Posterior vena cava (tissue), 2 donors: ENCODE measurements at regions of chr7 and their contacts with region 1.

Region 1: GRCh38 chr7:31043051-31043471 is 9.0 kb upstream of the ADCYAP1R1 start:
- DNase-seq: no peak

Region 2: GRCh38 chr7:30920584-30921539 is 122.2 kb before region 1 on chr7:
- intact Hi-C with region 1: no loop called
- DNase-seq: peak; percentile 92

Region 3: GRCh38 chr7:30996256-30996655 is 46.8 kb before region 1 on chr7:
- intact Hi-C with region 1: loop called in 1 of 2 experiments (anchors 1 kb)
- DNase-seq: no peak

Region 4: DNA sequence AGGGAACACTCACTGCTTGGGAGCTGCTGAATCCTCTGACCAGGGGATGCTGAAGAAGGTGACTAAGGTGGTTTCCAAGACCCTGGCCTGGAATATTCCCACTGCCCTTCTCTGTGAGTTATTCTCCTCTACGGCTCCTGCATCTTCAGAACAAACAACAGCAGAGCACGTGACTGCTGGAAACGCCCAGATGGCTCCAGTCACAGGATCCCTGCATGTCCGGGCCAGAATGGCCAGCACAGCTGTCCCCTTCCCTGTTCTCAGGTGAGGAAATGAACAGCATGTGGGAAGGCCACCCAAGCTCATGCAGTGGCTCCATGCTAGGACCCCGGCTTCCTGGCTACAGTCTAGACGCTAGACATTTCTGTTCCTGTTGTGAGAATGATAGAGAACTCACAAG is 36.2 kb before region 1 on chr7:
- intact Hi-C with region 1: no loop called
- DNase-seq: peak; percentile 56

Region 5: GRCh38 chr7:31066516-31067130 is 23.6 kb after region 1 on chr7:
- intact Hi-C with region 1: loop called in 1 of 2 experiments (anchors 1 kb)
- DNase-seq: peak; percentile 30

Region 6: DNA sequence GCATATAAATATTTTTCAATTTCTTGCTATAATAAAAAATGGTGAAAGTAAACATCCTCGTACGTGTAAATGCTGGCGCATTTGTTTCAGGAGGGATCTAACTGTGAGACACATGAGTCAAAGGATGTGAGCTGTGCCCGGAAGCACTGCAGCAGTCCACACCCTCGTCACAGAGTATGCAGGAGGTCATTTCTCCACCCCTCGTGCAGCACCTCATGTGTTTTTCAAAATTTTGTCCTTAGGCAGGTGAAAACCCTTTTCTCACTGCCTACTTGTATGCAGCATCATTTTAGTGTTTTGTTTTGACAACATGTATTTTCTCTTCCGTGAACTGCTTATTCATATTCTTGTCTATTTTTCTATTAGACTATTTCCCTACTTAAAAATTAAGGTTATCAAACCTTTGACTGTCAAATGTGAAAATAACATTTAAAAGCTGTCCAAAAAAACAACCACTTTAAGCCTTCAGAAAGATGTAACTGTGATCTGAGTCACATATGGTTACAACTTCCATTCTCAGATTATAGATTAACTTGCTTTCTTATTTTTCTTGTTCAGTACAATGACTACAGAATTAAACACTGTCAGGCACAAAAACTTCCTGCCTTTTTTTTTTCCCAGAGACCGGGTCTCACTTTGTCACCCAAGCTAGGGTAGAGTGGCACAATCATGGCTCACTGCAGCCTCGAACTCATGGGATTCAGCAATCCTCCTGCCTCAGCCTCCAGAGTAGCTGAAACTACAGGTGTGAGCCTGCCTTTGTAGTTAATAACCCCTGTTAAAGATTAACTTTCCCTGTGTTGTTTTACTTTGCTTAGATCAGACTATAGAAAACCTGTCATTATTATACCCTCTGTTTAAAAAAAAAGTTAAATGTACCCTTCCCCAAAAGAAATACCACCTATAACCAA is 1615.2 kb after region 1 on chr7:
- intact Hi-C with region 1: no loop called
- DNase-seq: no peak